Activated B cell treated with CpG ODN at 0.5 μM for 24 hours (primary cell): ENCODE measurements at regions of chr21 and their contacts with region 1.

Region 1: GRCh38 chr21:14382835-14383594 is at the start of gene HSPA13:
- DNase-seq: peak; percentile 93
- ATAC-seq: peak; percentile 94
- H3K4me3 Mint-ChIP-seq: peak within 1 kb of the TSS; percentile 98
- H3K27ac Mint-ChIP-seq: peak within 1 kb of the TSS; percentile 97
- H3K4me1 Mint-ChIP-seq: peaks cover 37% of the 10 kb centered on the region
- H3K27me3 Mint-ChIP-seq: no peaks in the 10 kb centered on the region
- CTCF ChIP-seq: no peak
- total RNA-seq, gene HSPA13: 17.0 and 17.8 TPM in 2 replicates

Region 2: DNA sequence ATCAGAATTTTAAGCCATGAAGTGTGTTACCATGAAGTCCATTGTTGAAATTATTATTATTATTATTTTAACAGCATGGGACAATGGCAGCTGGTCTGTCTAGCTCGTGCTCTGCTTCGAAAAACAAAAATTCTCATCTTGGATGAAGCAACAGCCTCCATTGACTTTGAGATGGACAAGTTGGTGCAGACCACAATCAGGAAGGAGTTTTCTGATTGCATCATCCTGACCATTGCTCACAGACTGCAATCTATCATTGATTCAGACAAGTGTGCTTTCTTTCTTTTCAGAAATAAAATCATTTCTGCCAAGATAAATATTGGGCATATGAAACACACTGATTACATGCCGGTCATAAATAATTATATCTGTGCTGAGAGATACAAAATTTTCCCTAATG is 21.1 kb before region 1 on chr21:
- CTCF ChIA-PET with region 1: no interaction called
- POLR2A ChIA-PET with region 1: no interaction called
- intact Hi-C with region 1: no loop called
- DNase-seq: no peak
- ATAC-seq: no peak
- H3K4me3 Mint-ChIP-seq: no peak overlapping the region
- H3K27ac Mint-ChIP-seq: no peak overlapping the region
- H3K4me1 Mint-ChIP-seq: no peaks in the 10 kb centered on the region
- H3K27me3 Mint-ChIP-seq: peaks cover 10% of the 10 kb centered on the region
- CTCF ChIP-seq: no peak

Region 3: GRCh38 chr21:14403681-14404318 is 20.8 kb after region 1 on chr21:
- CTCF ChIA-PET with region 1: no interaction called
- POLR2A ChIA-PET with region 1: no interaction called
- intact Hi-C with region 1: loop called (anchors 1 kb)
- DNase-seq: no peak
- ATAC-seq: peak; percentile 57
- H3K4me3 Mint-ChIP-seq: no peak overlapping the region
- H3K27ac Mint-ChIP-seq: no peak overlapping the region
- H3K4me1 Mint-ChIP-seq: no peaks in the 10 kb centered on the region
- H3K27me3 Mint-ChIP-seq: no peaks in the 10 kb centered on the region
- CTCF ChIP-seq: peak; percentile 77

Region 4: GRCh38 chr21:14675774-14676530 is 292.9 kb after region 1 on chr21:
- CTCF ChIA-PET with region 1: no interaction called
- POLR2A ChIA-PET with region 1: no interaction called
- intact Hi-C with region 1: loop called (anchors 2 kb)
- DNase-seq: no peak
- ATAC-seq: peak; percentile 79
- H3K4me3 Mint-ChIP-seq: peak overlapping the region; percentile 46
- H3K27ac Mint-ChIP-seq: peak overlapping the region; percentile 90
- H3K4me1 Mint-ChIP-seq: peaks cover 60% of the 10 kb centered on the region
- H3K27me3 Mint-ChIP-seq: no peaks in the 10 kb centered on the region
- CTCF ChIP-seq: no peak

Region 5: DNA sequence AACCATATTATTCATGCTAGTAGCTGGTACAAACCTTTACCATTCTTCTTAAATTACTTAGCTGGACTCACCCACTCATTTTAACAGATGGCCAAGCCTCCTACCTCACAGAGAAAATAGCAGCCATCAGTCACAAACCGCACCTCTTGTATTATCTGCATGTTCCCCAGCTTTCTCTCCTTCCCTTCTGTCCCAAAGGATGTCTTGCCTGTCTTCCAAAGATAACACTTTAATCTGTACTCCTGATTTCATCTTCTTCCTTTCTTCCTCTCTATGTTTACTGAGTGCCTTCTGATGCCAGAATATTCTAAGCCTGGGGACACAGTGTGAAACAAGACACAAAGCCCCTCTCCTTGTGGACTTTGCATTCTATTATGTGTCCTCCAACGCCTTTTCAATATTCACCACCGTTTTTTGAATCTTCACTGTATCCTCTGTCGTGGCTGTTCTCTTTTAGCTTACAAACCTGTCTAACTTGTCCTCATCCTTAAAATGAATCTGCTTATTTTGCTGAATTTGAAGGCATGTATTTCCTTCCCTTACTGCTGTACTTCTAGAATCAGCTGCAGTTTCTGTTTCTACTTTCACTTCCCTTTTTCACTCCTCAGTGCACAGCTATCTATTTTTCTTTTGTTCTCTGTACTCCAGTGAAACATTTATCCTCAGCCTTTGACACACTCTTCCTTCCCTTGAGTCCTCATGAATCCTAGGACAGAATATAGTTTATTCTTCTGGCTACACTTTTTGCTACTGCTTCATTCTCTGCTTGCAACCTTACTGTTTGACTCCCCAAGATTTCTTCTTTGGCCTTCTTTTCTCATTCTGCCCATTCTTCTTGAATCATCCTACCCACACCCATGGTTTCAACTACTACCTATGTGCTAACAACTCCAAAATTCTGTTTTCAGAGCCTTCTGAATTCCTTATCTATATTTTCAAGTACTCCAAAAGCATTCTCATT is 380.0 kb after region 1 on chr21:
- CTCF ChIA-PET with region 1: no interaction called
- POLR2A ChIA-PET with region 1: no interaction called
- intact Hi-C with region 1: loop called (anchors 1 kb)
- DNase-seq: no peak
- ATAC-seq: peak; percentile 95
- H3K4me3 Mint-ChIP-seq: no peak overlapping the region
- H3K27ac Mint-ChIP-seq: no peak overlapping the region
- H3K4me1 Mint-ChIP-seq: peaks cover 33% of the 10 kb centered on the region
- H3K27me3 Mint-ChIP-seq: no peaks in the 10 kb centered on the region
- CTCF ChIP-seq: no peak

Region 6: GRCh38 chr21:15034126-15034853 is 651.3 kb after region 1 on chr21:
- CTCF ChIA-PET with region 1: no interaction called
- POLR2A ChIA-PET with region 1: no interaction called
- intact Hi-C with region 1: no loop called
- DNase-seq: no peak
- ATAC-seq: no peak
- H3K4me3 Mint-ChIP-seq: no peak overlapping the region
- H3K27ac Mint-ChIP-seq: no peak overlapping the region
- H3K4me1 Mint-ChIP-seq: peaks cover 23% of the 10 kb centered on the region
- H3K27me3 Mint-ChIP-seq: no peaks in the 10 kb centered on the region
- CTCF ChIP-seq: no peak

Region 7: GRCh38 chr21:15121655-15122120 is 738.7 kb after region 1 on chr21:
- CTCF ChIA-PET with region 1: no interaction called
- POLR2A ChIA-PET with region 1: no interaction called
- intact Hi-C with region 1: loop called (anchors 10 kb)
- DNase-seq: no peak
- ATAC-seq: no peak
- H3K4me3 Mint-ChIP-seq: no peak overlapping the region
- H3K27ac Mint-ChIP-seq: no peak overlapping the region
- H3K4me1 Mint-ChIP-seq: no peaks in the 10 kb centered on the region
- H3K27me3 Mint-ChIP-seq: peaks cover 3% of the 10 kb centered on the region
- CTCF ChIP-seq: no peak